ENCODE measurements at regions of chr10 and their contacts with region 1.

Region 1: GRCh38 chr10:114266520-114266919 is 27.5 kb downstream of the VWA2 start:
- DNase-seq: peak; percentile 50
- ATAC-seq: peak; percentile 54
- H3K4me3 ChIP-seq: no peak overlapping the region
- H3K27ac ChIP-seq: no peak overlapping the region
- H3K4me1 ChIP-seq: peaks cover 5% of the 10 kb centered on the region
- H3K27me3 ChIP-seq: no peaks in the 10 kb centered on the region; the same call in 1 of the 2 replicates
- CTCF ChIP-seq: no peak
- POLR2A ChIP-seq: no peak
- RAD21 ChIP-seq: no peak

Region 2: DNA sequence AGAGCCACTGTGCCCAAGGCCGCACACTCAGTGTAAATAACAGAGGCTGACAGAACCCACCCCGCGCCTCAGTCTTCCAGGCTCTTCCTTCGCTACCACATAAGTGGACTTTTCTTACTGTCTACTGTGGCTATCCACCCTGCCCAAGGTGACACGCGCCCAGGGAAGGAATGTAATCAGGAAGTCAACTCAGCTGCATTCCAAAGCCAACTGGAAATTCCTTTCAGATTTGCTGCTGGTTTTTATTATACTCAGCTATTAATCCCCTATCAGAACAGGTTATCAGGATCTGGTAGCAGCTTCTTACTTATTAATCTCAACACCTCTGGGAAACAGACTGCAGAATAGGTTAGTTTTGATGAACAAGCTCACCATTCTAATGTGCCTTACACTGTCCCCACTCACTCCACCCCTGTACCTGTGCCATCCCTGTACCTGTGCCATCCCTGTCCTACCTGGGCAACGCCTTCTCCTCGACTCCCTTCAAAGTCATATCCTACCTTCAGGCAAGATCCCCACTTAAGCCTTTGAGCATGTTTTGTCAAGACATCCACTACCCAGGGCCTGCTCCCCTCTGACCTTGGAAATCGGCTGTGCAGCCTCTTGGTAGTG is 321.3 kb before region 1 on chr10:
- CTCF ChIA-PET with region 1: no interaction called
- POLR2A ChIA-PET with region 1: no interaction called
- dilution Hi-C with region 1: no loop called
- in situ Hi-C with region 1: no loop called
- intact Hi-C with region 1: loop called (anchors 10 kb)
- DNase-seq: peak; percentile 70
- ATAC-seq: peak; percentile 77
- H3K4me3 ChIP-seq: no peak overlapping the region
- H3K27ac ChIP-seq: no peak overlapping the region
- H3K4me1 ChIP-seq: peaks cover 6% of the 10 kb centered on the region
- H3K27me3 ChIP-seq: peaks cover 6% of the 10 kb centered on the region; the same call in 1 of the 2 replicates
- CTCF ChIP-seq: no peak
- POLR2A ChIP-seq: no peak
- RAD21 ChIP-seq: no peak

Measured in IMR-90 (cell line).